Posterior cingulate gyrus (tissue), 11 donors: ENCODE measurements at regions of chr4 and their contacts with region 1.

Region 1: DNA sequence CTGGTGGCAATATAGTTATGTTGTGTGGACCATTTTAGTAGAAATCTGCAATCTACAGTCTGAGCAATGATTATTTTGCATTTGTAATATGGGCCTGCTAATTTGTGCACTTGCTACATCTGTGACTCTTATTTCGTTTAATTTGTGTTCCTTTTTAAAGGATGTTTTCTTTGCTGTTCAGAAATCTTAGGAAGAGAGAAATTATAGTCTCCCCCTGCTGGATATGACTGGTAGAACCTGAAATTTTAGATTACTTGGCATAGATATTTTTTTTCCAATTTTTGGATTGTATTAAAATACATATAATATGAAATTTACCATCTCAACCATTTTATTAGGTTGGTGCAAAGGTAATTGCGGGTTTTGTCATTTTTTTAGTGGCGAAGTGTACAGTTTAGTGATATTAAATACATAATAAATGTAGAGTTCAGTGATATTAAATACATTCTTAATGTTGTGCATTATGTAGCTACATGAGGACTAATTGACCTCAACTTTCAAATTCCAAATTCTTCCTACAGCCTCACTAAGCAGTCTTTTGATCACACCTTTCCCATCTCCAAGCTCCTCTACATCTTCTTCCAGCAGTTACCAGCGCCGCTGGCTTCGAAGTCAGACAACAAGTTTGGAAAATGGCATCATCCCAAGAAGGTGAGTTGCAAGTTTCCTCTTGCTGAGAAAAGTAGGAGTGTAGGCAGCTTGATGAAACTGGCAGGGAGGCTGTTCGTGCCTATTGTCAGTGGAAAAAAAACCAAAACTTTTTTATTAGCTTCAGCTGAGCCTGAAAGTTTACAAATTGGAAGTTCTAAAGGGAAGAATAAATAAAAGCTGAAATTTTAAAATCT is 82.2 kb downstream of the FNIP2 start:
- DNase-seq: no peak

Region 2: GRCh38 chr4:158327525-158327924 is 523.5 kb before region 1 on chr4:
- intact Hi-C with region 1: no loop called
- DNase-seq: no peak

Region 3: GRCh38 chr4:158768555-158769174 is 82.4 kb before region 1 on chr4 and contains the start of gene FNIP2:
- intact Hi-C with region 1: loop called (anchors 2 kb)
- DNase-seq: peak; percentile 67 to 98 (median 85)